Thyroid gland (tissue), 4 donors: ENCODE measurements at regions of chr1 and their contacts with region 1.

Region 1: DNA sequence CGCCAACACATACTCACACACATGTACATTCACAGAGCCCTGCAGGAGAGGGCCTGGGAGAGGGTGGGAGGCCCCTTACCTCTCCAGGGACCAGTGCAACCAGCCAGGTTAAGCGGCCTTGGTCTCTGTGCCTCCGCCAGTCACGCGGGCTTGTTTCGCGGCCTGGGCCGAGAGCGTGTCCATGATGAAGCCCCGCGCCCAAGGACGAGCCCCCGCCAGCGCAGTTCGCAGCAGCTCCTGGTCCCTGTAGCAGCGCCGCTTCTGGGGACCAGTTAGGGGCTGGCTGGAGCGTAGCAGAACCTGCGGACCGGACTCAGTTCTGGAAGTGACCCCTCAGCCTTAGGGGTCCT is 7.3 kb upstream of the FAM167B start:
- DNase-seq: peak; percentile 36
- H3K4me3 ChIP-seq: peak overlapping the region in 1 of 3 donors; percentile 51
- H3K27ac ChIP-seq: peak overlapping the region; percentile 1 to 95 (median 75)
- H3K4me1 ChIP-seq: peaks cover 15 to 27% of the 10 kb centered on the region in 2 donors
- H3K27me3 ChIP-seq: no peaks in the 10 kb centered on the region
- CTCF ChIP-seq: no peak
- POLR2A ChIP-seq: no peak

Region 2: GRCh38 chr1:32291708-32292492 is 52.1 kb after region 1 on chr1 and contains the start of gene HDAC1:
- intact Hi-C with region 1: loop called (anchors 10 kb)
- DNase-seq: peak; percentile 99
- H3K4me3 ChIP-seq: peak within 1 kb of the TSS; percentile 78 to 98 (median 91)
- H3K27ac ChIP-seq: peak within 1 kb of the TSS; percentile 78 to 91 (median 79)
- H3K4me1 ChIP-seq: peaks cover 0 to 14% of the 10 kb centered on the region in 2 donors
- H3K27me3 ChIP-seq: no peaks in the 10 kb centered on the region
- CTCF ChIP-seq: peak in 1 of 6 experiments; percentile 3
- POLR2A ChIP-seq: peak; percentile 13 to 75
- total RNA-seq, gene HDAC1: 78.2 to 96.8 (median 85.0) TPM

Region 3: GRCh38 chr1:32305310-32305709 is 65.5 kb after region 1 on chr1:
- intact Hi-C with region 1: no loop called
- DNase-seq: no peak
- H3K4me3 ChIP-seq: no peak overlapping the region
- H3K27ac ChIP-seq: no peak overlapping the region
- H3K4me1 ChIP-seq: peaks cover 14 to 24% of the 10 kb centered on the region in 2 donors
- H3K27me3 ChIP-seq: no peaks in the 10 kb centered on the region
- CTCF ChIP-seq: no peak
- POLR2A ChIP-seq: no peak

Region 4: GRCh38 chr1:32335790-32336590 is 96.2 kb after region 1 on chr1 and contains the start of gene MARCKSL1:
- intact Hi-C with region 1: loop called (anchors 10 kb)
- DNase-seq: peak; percentile 83 to 88
- H3K4me3 ChIP-seq: peak within 1 kb of the TSS; percentile 18 to 81 (median 78)
- H3K27ac ChIP-seq: peak within 1 kb of the TSS; percentile 85 to 90 (median 87)
- H3K4me1 ChIP-seq: peaks cover 43 to 51% of the 10 kb centered on the region in 2 donors
- H3K27me3 ChIP-seq: no peaks in the 10 kb centered on the region
- CTCF ChIP-seq: no peak
- POLR2A ChIP-seq: peak; percentile 90 to 98
- total RNA-seq, gene MARCKSL1: 62.1 to 97.3 (median 70.6) TPM

Region 5: GRCh38 chr1:32426489-32427255 is 186.9 kb after region 1 on chr1:
- intact Hi-C with region 1: no loop called
- DNase-seq: peak; percentile 28 to 33
- H3K4me3 ChIP-seq: no peak overlapping the region
- H3K27ac ChIP-seq: no peak overlapping the region
- H3K4me1 ChIP-seq: peaks cover 6 to 9% of the 10 kb centered on the region in 2 donors
- H3K27me3 ChIP-seq: no peaks in the 10 kb centered on the region
- CTCF ChIP-seq: no peak
- POLR2A ChIP-seq: no peak

Region 6: DNA sequence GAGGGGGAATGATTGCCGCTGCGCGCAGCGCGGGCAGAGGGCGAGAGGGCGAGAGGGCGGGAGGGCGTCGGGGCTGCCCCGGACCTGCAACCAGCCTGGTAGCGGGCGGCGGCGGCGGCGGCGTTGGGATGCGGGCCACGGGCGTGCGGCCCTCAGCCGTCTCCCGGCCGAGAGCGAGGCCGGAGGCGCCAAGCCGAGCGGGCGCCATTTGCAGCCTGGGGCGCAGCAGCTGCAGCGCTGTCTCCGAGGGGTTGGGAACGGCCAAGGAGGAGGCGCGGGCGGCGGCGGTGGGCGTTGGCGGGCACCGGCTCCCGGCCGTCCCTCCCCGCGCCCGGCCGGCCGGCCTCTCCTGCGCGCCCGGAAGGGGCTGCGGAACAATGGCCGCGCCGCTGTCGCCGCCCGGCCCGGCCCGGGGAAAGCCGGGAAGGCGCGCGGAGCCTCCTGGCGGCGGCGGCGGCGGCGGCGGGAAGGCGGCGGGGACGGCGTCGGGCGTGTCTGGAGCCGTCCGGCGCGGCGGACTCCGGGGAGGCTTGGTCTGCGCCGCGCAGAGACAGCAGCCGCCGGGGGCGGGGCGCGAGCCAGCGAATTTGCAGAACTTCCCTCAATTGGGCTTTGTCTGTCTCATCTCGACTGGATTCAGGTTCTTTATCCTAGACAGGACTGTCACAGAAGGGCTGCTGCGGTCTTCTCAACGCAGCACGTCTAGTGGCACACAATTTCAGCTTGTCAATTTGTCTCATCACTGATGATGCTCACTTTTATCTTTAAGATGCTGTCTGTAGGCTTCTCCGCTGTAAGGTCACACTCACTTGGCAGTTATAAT is 260.8 kb after region 1 on chr1:
- intact Hi-C with region 1: no loop called
- DNase-seq: peak; percentile 61 to 64
- H3K4me3 ChIP-seq: peak overlapping the region; percentile 53 to 70 (median 63)
- H3K27ac ChIP-seq: peak overlapping the region; percentile 84 to 92 (median 88)
- H3K4me1 ChIP-seq: peaks cover 7 to 17% of the 10 kb centered on the region in 2 donors
- H3K27me3 ChIP-seq: no peaks in the 10 kb centered on the region
- CTCF ChIP-seq: peak in 3 of 6 experiments; percentile 35 to 49 (median 46)
- POLR2A ChIP-seq: peak in 1 of 2 donors; percentile 58